Right cardiac atrium (tissue), 5 donors: ENCODE measurements at regions of chr18 and their contacts with region 1.

Region 1: GRCh38 chr18:48475635-48476549 is 62.9 kb upstream of the CTIF start:
- DNase-seq: peak in 2 of 3 donors; percentile 22 to 65
- ATAC-seq: peak; percentile 86 to 91
- H3K4me3 ChIP-seq: no peak overlapping the region
- H3K27ac ChIP-seq: no peak overlapping the region
- H3K4me1 ChIP-seq: no peaks in the 10 kb centered on the region
- H3K27me3 ChIP-seq: no peaks in the 10 kb centered on the region

Region 2: GRCh38 chr18:47501946-47502345 is 973.9 kb before region 1 on chr18:
- intact Hi-C with region 1: no loop called
- DNase-seq: no peak
- ATAC-seq: no peak
- H3K4me3 ChIP-seq: no peak overlapping the region
- H3K27ac ChIP-seq: no peak overlapping the region
- H3K4me1 ChIP-seq: no peaks in the 10 kb centered on the region
- H3K27me3 ChIP-seq: no peaks in the 10 kb centered on the region

Region 3: DNA sequence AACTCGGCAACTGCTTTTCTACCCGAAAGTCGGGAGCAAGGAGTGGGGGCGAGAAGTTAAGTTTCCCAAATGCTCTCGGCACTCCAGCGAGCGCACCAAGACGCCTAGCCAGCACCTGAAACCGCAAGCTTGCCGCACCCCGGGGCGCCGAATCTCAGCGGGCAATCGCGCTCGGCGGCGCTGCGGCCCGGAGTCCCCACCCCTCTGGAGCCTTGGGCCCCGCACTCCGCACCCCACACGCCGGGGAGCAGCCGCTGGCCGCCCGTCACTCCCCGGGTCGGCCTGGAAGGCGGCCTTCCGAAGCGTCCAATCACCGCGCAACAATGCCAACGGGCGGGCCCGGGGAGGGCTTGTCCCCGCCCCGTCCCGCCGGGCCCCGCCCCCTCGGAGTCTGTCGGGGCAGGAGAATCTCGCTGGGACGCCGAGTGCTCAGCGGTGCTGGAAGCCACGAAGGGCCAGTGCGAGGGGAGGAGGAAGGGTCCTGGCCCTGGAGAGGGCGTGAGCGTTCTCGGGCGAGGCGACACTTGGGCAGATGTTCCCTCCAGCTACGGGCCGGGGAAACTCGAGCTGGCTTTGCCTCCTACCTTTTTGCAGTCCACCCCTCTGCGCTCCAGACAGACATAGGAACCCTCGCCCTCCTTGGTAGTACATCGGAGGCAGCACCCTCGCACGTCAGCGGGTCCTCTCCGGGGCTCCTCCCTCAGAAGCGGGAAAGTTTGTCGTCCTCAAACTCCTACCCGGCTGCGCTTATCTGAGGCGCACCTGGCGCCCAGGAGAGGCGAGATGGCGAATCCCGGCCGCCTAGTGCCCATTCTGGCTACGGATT is 65.6 kb before region 1 on chr18:
- intact Hi-C with region 1: no loop called
- DNase-seq: peak; percentile 95 to 97 (median 97)
- ATAC-seq: peak; percentile 99
- H3K4me3 ChIP-seq: peak overlapping the region; percentile 95
- H3K27ac ChIP-seq: peak overlapping the region; percentile 19
- H3K4me1 ChIP-seq: no peaks in the 10 kb centered on the region
- H3K27me3 ChIP-seq: no peaks in the 10 kb centered on the region

Region 4: GRCh38 chr18:48529796-48530195 is 53.9 kb after region 1 on chr18:
- intact Hi-C with region 1: loop called in 2 of 4 experiments (anchors 10 kb)
- DNase-seq: no peak
- ATAC-seq: peak; percentile 50 to 78
- H3K4me3 ChIP-seq: no peak overlapping the region
- H3K27ac ChIP-seq: no peak overlapping the region
- H3K4me1 ChIP-seq: no peaks in the 10 kb centered on the region
- H3K27me3 ChIP-seq: no peaks in the 10 kb centered on the region

Region 5: DNA sequence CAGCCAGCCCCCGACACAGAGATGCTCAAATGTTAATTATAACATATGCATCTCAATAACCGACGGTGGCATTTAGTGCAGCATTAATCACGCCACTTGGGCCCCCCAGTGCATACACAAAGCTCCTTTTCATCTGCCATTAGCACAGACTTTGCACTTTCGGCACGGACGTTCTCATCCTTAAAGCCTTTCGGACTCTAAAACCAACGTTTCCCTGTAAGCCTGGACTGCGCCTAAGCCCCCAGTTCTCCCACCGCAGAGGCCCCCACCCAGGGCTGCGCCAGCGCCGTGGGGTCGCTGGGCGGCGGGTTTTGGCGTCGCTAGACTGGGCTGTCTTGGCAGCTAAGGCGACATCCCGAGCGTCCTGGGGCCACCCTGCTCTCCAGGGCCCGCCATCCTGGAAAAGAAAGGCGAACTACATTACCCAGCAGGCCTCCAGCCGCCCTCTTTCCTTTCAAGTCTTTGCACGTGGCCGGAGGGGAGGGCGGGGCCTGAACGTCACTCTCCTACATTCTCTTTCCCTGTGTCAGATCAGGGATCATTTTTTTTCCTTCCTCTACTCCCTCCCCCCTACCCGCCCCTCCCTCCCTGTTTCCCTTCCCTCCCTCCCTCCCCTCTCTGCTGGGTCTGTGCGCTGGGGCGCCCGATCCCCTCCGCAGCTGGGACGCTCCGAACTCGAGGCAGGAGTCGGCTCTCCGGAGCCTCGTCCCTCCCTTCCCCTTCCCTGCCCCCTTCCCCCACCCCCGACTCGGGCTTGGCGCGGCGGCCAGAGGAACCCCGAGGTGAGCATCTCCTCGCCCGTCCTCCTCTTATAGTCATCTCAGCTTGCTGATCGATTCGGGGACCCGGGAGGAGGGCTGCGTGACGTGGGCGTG is 62.9 kb after region 1 on chr18 and contains the start of gene CTIF:
- intact Hi-C with region 1: loop called in 2 of 4 experiments (anchors 2 to 10 kb)
- DNase-seq: peak; percentile 97 to 99 (median 98)
- ATAC-seq: peak; percentile 93
- H3K4me3 ChIP-seq: peak within 1 kb of the TSS; percentile 80
- H3K27ac ChIP-seq: peak within 1 kb of the TSS; percentile 90
- H3K4me1 ChIP-seq: peaks cover 2% of the 10 kb centered on the region
- H3K27me3 ChIP-seq: no peaks in the 10 kb centered on the region
- total RNA-seq, gene CTIF: 41.0 to 78.2 (median 49.8) TPM

Region 6: DNA sequence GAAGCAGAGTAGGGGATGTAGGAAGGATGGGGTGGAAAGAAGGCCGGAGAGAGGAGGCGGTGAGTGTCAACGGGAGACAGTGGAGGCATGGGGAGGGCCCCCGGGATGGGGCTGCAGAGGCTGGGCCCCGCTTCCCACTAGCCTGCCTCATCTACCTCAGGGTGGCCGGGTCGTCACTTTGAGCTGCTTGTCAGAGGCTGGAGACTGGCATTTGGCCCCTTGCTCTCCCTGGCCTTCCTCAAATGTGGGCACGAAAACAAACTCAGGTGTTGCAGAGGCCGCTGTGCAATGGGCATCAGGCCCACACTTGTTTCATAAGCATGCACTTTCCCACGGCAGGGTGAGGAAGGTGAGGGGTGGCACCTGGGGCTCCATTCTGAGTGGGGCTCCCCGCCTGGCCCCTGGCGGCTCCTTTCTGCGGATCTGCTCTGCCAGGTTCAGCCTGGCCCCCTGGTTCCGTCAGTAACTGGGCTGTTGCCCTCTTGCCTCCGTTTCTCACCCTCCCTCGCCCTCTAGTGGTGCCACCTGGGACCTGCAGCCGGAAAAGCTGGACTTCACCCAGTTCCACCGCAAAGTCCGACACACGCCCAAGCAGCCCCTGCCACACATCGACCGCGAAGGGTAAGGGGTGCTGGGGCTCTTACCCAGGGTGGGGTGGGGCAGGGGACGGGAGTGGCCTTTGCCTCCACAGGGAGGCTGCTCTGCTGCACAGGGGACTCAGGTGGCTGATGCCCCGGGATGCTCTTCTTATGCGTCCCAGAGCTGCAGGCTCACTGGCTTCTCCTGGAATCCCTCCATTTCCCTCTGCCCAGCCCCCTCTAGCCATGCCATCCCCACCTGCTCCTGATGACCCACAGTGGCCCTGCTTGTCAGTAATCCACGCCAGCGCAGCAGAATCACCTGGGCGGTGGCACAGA is 188.3 kb after region 1 on chr18:
- intact Hi-C with region 1: loop called (anchors 1 to 5 kb)
- DNase-seq: peak; percentile 63 to 90 (median 87)
- ATAC-seq: peak; percentile 42 to 59
- H3K4me3 ChIP-seq: no peak overlapping the region
- H3K27ac ChIP-seq: no peak overlapping the region
- H3K4me1 ChIP-seq: peaks cover 8% of the 10 kb centered on the region
- H3K27me3 ChIP-seq: no peaks in the 10 kb centered on the region